T-cell (primary cell): ENCODE measurements at regions of chr1 and their contacts with region 1.

Region 1: DNA sequence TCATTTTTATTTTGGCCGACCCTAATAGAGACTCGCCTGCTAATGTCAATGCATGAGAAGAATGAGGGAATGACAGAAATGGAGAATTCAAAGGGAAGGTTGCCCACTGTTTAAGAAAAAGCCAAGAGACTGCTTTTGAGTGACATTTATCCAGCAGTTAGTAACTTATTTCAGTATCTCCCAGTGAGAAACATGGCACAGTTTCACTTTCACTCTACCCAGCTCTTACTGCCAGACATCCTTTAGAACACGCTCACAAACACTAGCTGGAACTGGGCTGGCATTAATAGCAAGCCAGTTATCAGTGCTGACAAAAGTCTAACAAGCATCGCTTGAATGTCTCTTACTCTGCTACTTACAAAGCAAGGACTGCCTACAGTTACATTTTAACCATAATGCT is 8.5 kb downstream of the GGPS1 start:
- DNase-seq: peak in 7 of 35 experiments; percentile 7 to 69 (median 19)
- ATAC-seq: peak; percentile 83 to 95 (median 90)
- H3K4me3 ChIP-seq: no peak overlapping the region
- H3K4me3 Mint-ChIP-seq: peak overlapping the region; percentile 58 to 73 (median 67)
- H3K27ac ChIP-seq: peak overlapping the region; percentile 43
- H3K27ac Mint-ChIP-seq: peak overlapping the region; percentile 85 to 88
- H3K4me1 ChIP-seq: peaks cover 9 to 11% of the 10 kb centered on the region in 2 experiments
- H3K4me1 Mint-ChIP-seq: peaks cover 29 to 38% (median 34%) of the 10 kb centered on the region in 3 donors
- H3K27me3 ChIP-seq: no peaks in the 10 kb centered on the region
- H3K27me3 Mint-ChIP-seq: no peaks in the 10 kb centered on the region

Region 2: GRCh38 chr1:235275223-235275622 is 61.7 kb before region 1 on chr1:
- CTCF ChIA-PET with region 1: no interaction called
- POLR2A ChIA-PET with region 1: interaction called in 1 of 2 experiments, 11 read pairs
- DNase-seq: peak in 1 of 35 experiments; percentile 43
- ATAC-seq: peak; percentile 62 to 86 (median 74)
- H3K4me3 ChIP-seq: no peak overlapping the region
- H3K4me3 Mint-ChIP-seq: peak overlapping the region; percentile 9 to 41 (median 24)
- H3K27ac ChIP-seq: peak overlapping the region; percentile 37
- H3K27ac Mint-ChIP-seq: peak overlapping the region; percentile 33 to 78
- H3K4me1 ChIP-seq: peaks cover 24 to 42% of the 10 kb centered on the region in 2 experiments
- H3K4me1 Mint-ChIP-seq: peaks cover 79 to 82% (median 81%) of the 10 kb centered on the region in 3 donors
- H3K27me3 ChIP-seq: no peaks in the 10 kb centered on the region
- H3K27me3 Mint-ChIP-seq: no peaks in the 10 kb centered on the region

Region 3: GRCh38 chr1:235313931-235314678 is 22.8 kb before region 1 on chr1:
- CTCF ChIA-PET with region 1: no interaction called
- POLR2A ChIA-PET with region 1: no interaction called
- DNase-seq: no peak
- ATAC-seq: no peak
- H3K4me3 ChIP-seq: no peak overlapping the region
- H3K4me3 Mint-ChIP-seq: peak overlapping the region; percentile 49 to 65 (median 62)
- H3K27ac ChIP-seq: peak overlapping the region; percentile 46
- H3K27ac Mint-ChIP-seq: peak overlapping the region; percentile 85 to 90
- H3K4me1 ChIP-seq: peaks cover 30 to 43% of the 10 kb centered on the region in 2 experiments
- H3K4me1 Mint-ChIP-seq: peaks cover 72 to 80% (median 77%) of the 10 kb centered on the region in 3 donors
- H3K27me3 ChIP-seq: no peaks in the 10 kb centered on the region
- H3K27me3 Mint-ChIP-seq: no peaks in the 10 kb centered on the region

Region 4: DNA sequence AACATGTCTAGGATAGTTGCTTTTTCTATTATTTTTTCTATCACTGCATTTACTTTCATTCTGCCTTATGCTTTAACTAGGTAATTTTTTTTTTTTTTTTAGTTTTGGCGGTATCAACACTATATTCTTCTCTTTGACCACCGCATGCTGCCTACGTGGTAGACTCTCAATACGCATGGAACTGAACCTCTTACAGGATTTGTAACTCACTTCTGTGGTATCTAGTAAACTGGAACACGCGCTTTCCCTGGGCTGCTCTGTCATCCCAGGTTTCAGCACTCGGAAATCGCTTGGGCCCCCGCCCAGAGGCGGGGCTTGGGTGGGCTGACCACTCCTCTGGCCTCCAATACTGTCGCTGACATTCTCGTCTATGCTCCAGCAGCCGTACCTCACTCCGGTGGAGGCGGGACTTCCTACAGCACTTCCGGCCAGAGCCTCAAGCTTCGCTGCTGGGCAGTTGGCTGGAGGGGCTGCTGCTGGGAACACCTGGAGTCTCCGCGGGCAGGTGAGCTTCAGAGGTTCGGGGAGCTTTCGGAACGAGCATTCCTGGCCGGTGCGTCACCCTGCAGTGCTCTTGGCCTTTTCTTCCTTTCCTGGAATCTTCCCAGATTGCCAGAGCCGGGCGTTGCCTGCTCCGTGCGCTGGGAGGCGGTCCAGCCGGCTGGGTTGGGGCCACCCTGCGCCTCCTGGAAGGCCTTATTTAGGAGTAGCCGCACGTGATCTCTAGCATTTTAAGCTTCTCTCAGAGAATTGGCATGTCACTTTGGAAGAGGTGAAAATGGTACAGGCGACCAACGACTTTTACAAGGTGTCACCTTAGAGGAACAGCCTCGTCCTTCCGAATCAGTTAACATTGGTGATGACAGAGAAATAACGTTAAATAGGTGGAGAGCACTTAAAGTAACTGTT is 30.4 kb after region 1 on chr1 and contains the start of gene TBCE:
- CTCF ChIA-PET with region 1: no interaction called
- POLR2A ChIA-PET with region 1: interaction called in 1 of 2 experiments, 11 read pairs
- DNase-seq: peak; percentile 58 to 84 (median 74)
- ATAC-seq: peak; percentile 96 to 100 (median 99)
- H3K4me3 ChIP-seq: peak within 1 kb of the TSS; percentile 82 to 98
- H3K4me3 Mint-ChIP-seq: peak within 1 kb of the TSS; percentile 97 to 99 (median 99)
- H3K27ac ChIP-seq: peak within 1 kb of the TSS; percentile 64
- H3K27ac Mint-ChIP-seq: peak within 1 kb of the TSS; percentile 89 to 94
- H3K4me1 ChIP-seq: peaks cover 4 to 10% of the 10 kb centered on the region in 2 experiments
- H3K4me1 Mint-ChIP-seq: peaks cover 33 to 41% (median 34%) of the 10 kb centered on the region in 3 donors
- H3K27me3 ChIP-seq: no peaks in the 10 kb centered on the region
- H3K27me3 Mint-ChIP-seq: no peaks in the 10 kb centered on the region
- total RNA-seq, gene TBCE: 15.6 to 21.5 (median 18.6) TPM

Region 5: GRCh38 chr1:235495551-235495950 is 158.6 kb after region 1 on chr1:
- CTCF ChIA-PET with region 1: no interaction called
- POLR2A ChIA-PET with region 1: interaction called in 1 of 2 experiments, 11 read pairs
- DNase-seq: no peak
- ATAC-seq: no peak
- H3K4me3 ChIP-seq: no peak overlapping the region
- H3K4me3 Mint-ChIP-seq: no peak overlapping the region
- H3K27ac ChIP-seq: no peak overlapping the region
- H3K27ac Mint-ChIP-seq: no peak overlapping the region
- H3K4me1 ChIP-seq: peaks cover 0 to 5% of the 10 kb centered on the region in 2 experiments
- H3K4me1 Mint-ChIP-seq: peaks cover 9 to 16% (median 15%) of the 10 kb centered on the region in 3 donors
- H3K27me3 ChIP-seq: no peaks in the 10 kb centered on the region
- H3K27me3 Mint-ChIP-seq: no peaks in the 10 kb centered on the region

Region 6: DNA sequence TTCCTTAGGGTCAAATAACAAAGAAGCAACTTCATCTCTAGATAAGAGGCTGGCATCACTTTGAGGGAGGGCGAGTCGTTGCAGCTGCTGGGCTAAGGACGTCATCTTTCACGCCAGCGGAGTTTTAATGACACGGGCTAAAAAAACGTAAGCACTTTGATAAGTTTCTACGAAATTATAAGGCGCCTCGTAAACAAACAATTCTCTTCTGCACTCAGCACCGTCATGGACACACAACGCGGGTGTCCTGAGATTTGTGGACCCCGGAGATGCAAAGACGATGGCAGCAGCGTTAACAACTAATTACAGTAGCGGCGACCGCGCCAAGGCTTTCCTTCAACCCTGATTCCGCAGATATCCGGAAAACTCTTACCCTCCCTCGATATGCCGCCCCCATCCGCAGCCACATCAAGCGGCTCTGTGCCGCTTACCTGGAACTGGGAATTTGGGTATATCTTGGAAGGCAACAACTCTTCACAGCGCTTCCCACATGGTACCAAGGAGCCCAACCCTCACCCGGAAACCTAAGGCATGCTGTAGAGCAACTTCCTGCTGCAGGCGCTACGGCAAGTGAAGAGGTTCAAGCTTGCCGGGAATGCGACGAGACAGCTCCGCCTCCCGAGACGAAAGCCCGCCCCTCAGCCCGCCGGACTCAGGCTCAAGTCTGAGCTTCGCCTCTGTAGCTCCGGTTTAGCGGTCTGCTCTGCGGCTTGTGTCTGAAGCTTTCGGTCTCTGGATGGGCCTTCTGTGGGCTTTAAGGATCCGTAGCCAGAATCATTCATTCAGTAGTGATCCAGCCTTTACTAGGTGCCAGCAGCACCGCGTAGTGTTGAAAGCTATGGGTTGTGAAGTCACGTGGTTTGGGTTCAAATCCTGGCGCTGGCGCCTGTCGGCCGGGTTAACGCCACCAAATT is 1267.3 kb after region 1 on chr1 and contains the start of gene HEATR1:
- CTCF ChIA-PET with region 1: no interaction called
- POLR2A ChIA-PET with region 1: no interaction called
- DNase-seq: peak; percentile 54 to 91 (median 71)
- ATAC-seq: peak; percentile 89 to 95 (median 94)
- H3K4me3 ChIP-seq: peak within 1 kb of the TSS; percentile 82 to 99
- H3K4me3 Mint-ChIP-seq: peak within 1 kb of the TSS; percentile 90 to 99 (median 96)
- H3K27ac ChIP-seq: peak within 1 kb of the TSS; percentile 50
- H3K27ac Mint-ChIP-seq: peak within 1 kb of the TSS; percentile 69 to 92
- H3K4me1 ChIP-seq: peaks cover 9 to 17% of the 10 kb centered on the region in 2 experiments
- H3K4me1 Mint-ChIP-seq: peaks cover 27 to 40% (median 39%) of the 10 kb centered on the region in 3 donors
- H3K27me3 ChIP-seq: peaks cover 0 to 9% of the 10 kb centered on the region in 2 experiments
- H3K27me3 Mint-ChIP-seq: peaks cover 0 to 13% of the 10 kb centered on the region in 2 donors
- total RNA-seq, gene HEATR1: 42.3 to 49.8 (median 46.9) TPM